ENCODE measurements at regions of chr3 and their contacts with region 1.

Region 1: DNA sequence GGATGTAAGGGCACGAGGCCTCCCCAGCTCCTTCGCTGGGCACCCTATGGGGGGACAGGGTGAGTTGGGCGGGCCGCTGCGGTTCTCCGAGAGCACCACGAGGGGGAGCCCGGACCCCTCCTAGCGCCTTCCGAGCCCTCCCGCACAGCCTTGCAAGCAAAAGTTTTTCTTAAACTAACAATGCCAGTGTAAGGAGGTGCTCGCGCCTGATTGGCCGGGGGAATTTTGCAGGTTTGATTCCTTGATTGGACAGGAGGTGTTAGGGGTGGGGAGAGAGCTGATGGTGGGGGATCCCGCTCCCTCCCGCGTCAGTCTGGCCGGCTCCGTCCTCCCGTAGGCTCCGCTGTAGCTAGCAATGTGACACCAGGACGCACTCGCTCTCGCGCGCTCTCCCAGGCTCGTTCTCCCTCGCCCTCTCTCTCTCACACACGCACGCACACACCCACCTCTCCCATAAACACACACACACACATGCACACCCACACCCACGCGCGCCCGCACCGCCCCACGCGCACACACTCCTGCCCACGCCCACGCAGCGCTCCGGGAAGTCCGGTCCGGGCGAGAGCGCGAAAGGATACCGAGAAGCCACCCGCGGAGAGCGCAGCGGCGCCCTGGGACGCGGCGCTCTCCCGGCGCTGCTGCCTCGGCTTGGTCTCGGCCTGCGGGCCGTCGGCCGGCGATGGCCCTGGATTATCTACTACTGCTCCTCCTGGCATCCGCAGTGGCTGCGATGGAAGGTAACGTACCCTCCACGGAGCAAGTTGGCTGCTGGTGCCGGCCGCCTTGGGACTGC is at the start of gene EPHB1:
- DNase-seq: peak; percentile 58 to 80
- ATAC-seq: peak; percentile 83 to 93
- H3K4me3 ChIP-seq: peak within 1 kb of the TSS; percentile 39
- H3K27ac ChIP-seq: no peak within 1 kb of the TSS
- H3K4me1 ChIP-seq: no peaks in the 10 kb centered on the region
- CTCF ChIP-seq: peak; percentile 68
- EP300 ChIP-seq: no peak
- POLR2A ChIP-seq: no peak
- RAD21 ChIP-seq: peak; percentile 78 to 79
- polyA plus RNA-seq, gene EPHB1: 0.18 and 0.21 TPM in 2 replicates

Region 2: GRCh38 chr3:135503760-135504686 is 708.9 kb after region 1 on chr3:
- CTCF ChIA-PET with region 1: interaction called, 37 read pairs
- POLR2A ChIA-PET with region 1: no interaction called
- DNase-seq: peak; percentile 36 to 41
- ATAC-seq: peak; percentile 93 to 96
- H3K4me3 ChIP-seq: no peak overlapping the region
- H3K27ac ChIP-seq: no peak overlapping the region
- H3K4me1 ChIP-seq: no peaks in the 10 kb centered on the region
- CTCF ChIP-seq: peak; percentile 42
- EP300 ChIP-seq: no peak
- POLR2A ChIP-seq: no peak
- RAD21 ChIP-seq: peak; percentile 53 to 68

Region 3: DNA sequence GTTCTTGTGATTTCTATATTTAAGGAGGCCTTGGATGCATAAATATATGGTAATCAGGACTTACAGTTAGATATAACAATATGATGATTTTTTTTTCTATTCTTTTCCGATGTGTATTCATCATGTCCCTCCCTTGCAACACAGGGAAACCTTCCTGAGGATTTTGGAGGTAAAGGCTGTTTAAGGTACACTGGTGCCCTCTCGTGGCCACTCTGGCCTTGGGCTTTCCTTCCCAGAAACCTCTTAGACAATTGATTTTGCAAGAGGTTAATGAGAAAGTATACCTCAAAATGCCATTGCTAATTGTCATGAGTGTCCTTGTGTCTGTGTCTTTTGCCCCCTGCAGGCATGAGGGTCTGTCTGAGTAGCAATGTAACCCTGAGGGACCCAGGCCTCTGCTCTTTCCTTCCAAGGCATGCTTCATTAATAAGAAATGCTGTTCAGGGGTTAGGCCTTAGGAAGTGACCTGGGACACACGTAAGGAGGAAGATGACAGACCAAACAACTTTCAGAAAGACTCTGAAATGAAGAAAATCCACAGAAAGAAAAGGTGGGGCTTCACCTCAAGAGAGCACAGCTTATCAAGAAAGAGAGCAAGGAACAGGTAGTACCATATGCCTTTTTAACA is 1100.1 kb after region 1 on chr3:
- CTCF ChIA-PET with region 1: interaction called, 17 read pairs
- POLR2A ChIA-PET with region 1: no interaction called
- DNase-seq: peak; percentile 18 to 71
- ATAC-seq: peak; percentile 78 to 79; a peak in 5 of 6 replicates
- H3K4me3 ChIP-seq: no peak overlapping the region
- H3K27ac ChIP-seq: no peak overlapping the region
- H3K4me1 ChIP-seq: no peaks in the 10 kb centered on the region
- CTCF ChIP-seq: peak; percentile 75
- EP300 ChIP-seq: no peak
- POLR2A ChIP-seq: no peak
- RAD21 ChIP-seq: peak; percentile 72 to 81

Measured in A549 (cell line).